ENCODE measurements at regions of chr1 and their contacts with region 1.

Region 1: DNA sequence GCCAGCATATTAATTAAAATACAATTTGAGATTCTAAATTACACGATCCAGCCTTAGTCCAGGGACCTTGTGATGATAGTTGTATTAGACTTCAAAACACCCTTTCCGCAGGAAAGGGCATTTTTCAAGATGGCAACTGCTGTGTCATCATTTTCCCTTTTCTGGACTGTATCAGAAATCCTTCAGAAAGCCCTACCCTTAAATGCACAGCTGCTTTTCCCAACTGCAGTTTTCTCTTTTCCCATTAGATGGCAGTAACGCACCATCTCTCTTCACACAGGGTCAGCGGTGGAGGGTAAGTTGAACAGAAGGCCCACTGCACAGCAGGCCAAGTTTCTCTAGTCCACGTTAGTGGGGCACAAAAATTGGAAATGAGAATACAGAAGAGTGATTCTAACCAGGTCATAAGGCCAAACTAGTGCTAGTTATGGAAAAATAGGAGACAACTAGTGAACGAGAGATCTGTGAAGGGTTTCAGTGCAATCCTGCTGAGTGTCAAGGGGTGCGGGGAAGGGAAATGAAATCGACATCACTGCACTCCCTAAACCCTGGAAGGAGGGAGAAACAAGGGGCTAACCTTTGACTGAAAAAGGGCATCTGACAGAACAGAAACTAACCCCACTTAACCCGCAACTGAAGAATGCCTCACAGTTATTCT is 22.1 kb upstream of the TDRD10 start:
- DNase-seq: no peak
- H3K4me3 ChIP-seq: no peak overlapping the region
- H3K27ac ChIP-seq: peak overlapping the region; percentile 3 to 44 (median 30)
- H3K4me1 ChIP-seq: peaks cover 2 to 29% (median 23%) of the 10 kb centered on the region in 4 donors
- H3K27me3 ChIP-seq: no peaks in the 10 kb centered on the region
- CTCF ChIP-seq: peak; percentile 95 to 99 (median 99)
- EP300 ChIP-seq: no peak
- POLR2A ChIP-seq: no peak

Region 2: GRCh38 chr1:154546264-154547063 is 66.6 kb after region 1 on chr1:
- intact Hi-C with region 1: loop called (anchors 2 kb)
- DNase-seq: no peak
- H3K4me3 ChIP-seq: no peak overlapping the region
- H3K27ac ChIP-seq: no peak overlapping the region
- H3K4me1 ChIP-seq: peaks cover 0 to 14% (median 7%) of the 10 kb centered on the region in 4 donors
- H3K27me3 ChIP-seq: peaks cover 0 to 17% (median 0%) of the 10 kb centered on the region in 4 donors
- CTCF ChIP-seq: peak; percentile 69 to 82 (median 81)
- EP300 ChIP-seq: no peak
- POLR2A ChIP-seq: no peak

Region 3: GRCh38 chr1:154567386-154568156 is 87.7 kb after region 1 on chr1 and contains the start of gene CHRNB2:
- intact Hi-C with region 1: no loop called
- DNase-seq: no peak
- H3K4me3 ChIP-seq: peak within 1 kb of the TSS; percentile 7 to 35 (median 30)
- H3K27ac ChIP-seq: no peak within 1 kb of the TSS
- H3K4me1 ChIP-seq: peaks cover 8 to 13% (median 12%) of the 10 kb centered on the region in 4 donors
- H3K27me3 ChIP-seq: peaks cover 0 to 36% (median 0%) of the 10 kb centered on the region in 4 donors
- CTCF ChIP-seq: peak in 2 of 3 experiments; percentile 11 to 23
- EP300 ChIP-seq: no peak
- POLR2A ChIP-seq: no peak
- total RNA-seq, gene CHRNB2: under 0.01 to 0.65 (median 0.19) TPM

Region 4: GRCh38 chr1:154878371-154879022 is 398.6 kb after region 1 on chr1:
- intact Hi-C with region 1: loop called (anchors 2 kb)
- DNase-seq: no peak
- H3K4me3 ChIP-seq: no peak overlapping the region
- H3K27ac ChIP-seq: no peak overlapping the region
- H3K4me1 ChIP-seq: peaks cover 0 to 9% (median 5%) of the 10 kb centered on the region in 4 donors
- H3K27me3 ChIP-seq: peaks cover 0 to 7% (median 0%) of the 10 kb centered on the region in 4 donors
- CTCF ChIP-seq: peak; percentile 86 to 91 (median 91)
- EP300 ChIP-seq: no peak
- POLR2A ChIP-seq: no peak

Measured in esophagus muscularis mucosa (tissue), 4 donors.